Vagina (tissue), 2 donors: ENCODE measurements at regions of chr2 and their contacts with region 1.

Region 1: GRCh38 chr2:32063310-32064161 is at the start of gene SPAST:
- DNase-seq: peak; percentile 96 to 97
- H3K4me3 ChIP-seq: peak within 1 kb of the TSS; percentile 58 to 95
- H3K27ac ChIP-seq: peak within 1 kb of the TSS; percentile 86
- H3K4me1 ChIP-seq: peaks cover 26% of the 10 kb centered on the region
- H3K27me3 ChIP-seq: no peaks in the 10 kb centered on the region
- CTCF ChIP-seq: peak in 1 of 3 experiments; percentile 69
- POLR2A ChIP-seq: no peak
- total RNA-seq, gene SPAST: 20.6 TPM

Region 2: DNA sequence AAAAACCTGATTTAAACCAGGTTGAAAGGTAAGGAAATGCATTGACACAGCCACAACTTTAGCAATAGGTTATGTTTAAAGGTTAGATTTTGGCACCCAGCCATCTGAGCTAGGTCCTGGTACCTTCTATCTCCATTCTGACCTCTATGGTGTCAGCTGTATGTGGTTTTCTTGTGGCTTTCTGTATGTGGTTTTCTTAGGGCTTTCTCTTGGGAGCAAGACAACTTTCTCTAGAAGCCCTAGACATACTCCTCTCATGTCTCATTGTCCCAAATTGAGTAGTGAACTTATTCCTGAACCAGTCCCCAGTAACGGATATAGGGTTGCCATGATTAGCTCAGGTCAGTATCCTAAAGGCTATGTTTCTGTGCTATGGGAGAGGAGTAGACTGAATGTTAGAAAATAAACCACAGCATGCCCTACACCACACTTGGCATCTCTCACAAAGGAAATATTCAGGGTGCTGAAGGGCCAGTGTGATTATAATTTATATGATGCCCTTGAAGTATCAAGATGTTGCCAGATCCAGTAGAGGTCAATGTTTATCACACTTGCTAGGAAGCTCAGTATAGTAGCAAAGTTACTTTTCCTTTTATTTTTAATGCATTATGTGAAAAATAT is 1432.4 kb before region 1 on chr2:
- intact Hi-C with region 1: no loop called
- DNase-seq: no peak
- H3K4me3 ChIP-seq: no peak overlapping the region
- H3K27ac ChIP-seq: no peak overlapping the region
- H3K4me1 ChIP-seq: no peaks in the 10 kb centered on the region
- H3K27me3 ChIP-seq: no peaks in the 10 kb centered on the region
- CTCF ChIP-seq: no peak
- POLR2A ChIP-seq: no peak

Region 3: GRCh38 chr2:32161296-32161695 is 97.8 kb after region 1 on chr2:
- intact Hi-C with region 1: loop called (anchors 5 kb)
- DNase-seq: no peak
- H3K4me3 ChIP-seq: no peak overlapping the region
- H3K27ac ChIP-seq: no peak overlapping the region
- H3K4me1 ChIP-seq: peaks cover 12% of the 10 kb centered on the region
- H3K27me3 ChIP-seq: no peaks in the 10 kb centered on the region
- CTCF ChIP-seq: no peak
- POLR2A ChIP-seq: no peak